ENCODE measurements at regions of chr17 and their contacts with region 1.

Region 1: GRCh38 chr17:76557368-76558197 is 17.7 kb downstream of the PRCD start:
- DNase-seq: peak; percentile 82
- ATAC-seq: peak; percentile 85
- H3K4me3 ChIP-seq: peak overlapping the region; percentile 74
- H3K27ac ChIP-seq: peak overlapping the region; percentile 95
- H3K4me1 ChIP-seq: peaks cover 14% of the 10 kb centered on the region
- H3K27me3 ChIP-seq: no peaks in the 10 kb centered on the region
- CTCF ChIP-seq: peak; percentile 24 to 65 (median 64); a peak in 5 of 6 replicates
- EP300 ChIP-seq: no peak
- POLR2A ChIP-seq: peak; percentile 98
- RAD21 ChIP-seq: no peak

Region 2: DNA sequence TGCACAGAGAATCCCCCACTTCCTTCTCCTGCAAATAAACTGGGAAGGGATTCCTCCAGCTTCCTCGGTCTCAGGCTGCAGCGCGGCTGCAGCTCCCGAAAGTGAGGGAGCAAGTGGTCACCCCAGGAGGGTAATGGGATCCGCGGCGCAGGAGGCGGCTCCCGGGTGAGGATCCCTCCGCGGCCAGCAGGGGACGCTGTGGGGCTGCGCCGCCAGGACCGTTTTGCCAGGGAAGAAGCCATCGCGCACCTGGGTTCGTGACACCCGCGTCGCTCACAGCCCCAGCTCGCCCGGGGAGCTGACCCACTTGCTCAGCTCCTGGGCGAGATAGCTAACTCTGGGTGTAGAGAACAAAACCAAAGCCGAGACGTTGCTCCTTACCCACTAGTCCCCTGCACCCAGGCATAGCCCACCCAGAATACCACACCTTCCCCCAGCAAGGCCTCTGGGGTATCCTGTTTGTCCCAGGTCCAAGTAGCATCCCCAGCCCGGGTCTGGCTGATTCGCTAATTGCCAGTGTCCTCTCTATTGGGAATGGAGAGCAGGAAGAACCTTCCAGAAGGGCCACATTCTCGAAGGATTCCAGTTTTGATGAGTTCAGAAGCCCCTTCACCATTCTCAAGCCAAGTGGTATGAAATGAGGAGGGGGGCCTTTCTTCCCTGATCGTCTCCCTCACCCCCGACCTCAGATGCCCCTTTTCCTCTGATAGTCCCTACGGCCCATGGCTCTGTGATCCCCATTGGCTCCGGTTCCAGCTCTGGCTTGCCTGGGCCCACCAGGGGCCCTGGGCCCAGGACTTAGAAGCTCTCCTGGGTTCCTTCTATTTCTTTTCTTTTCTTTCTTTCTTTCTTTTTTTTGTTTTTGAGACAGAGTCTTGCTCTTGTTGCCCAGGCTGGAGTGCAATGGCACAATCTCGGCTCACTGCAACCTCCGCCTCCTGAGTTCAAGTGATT is 34.2 kb before region 1 on chr17:
- CTCF ChIA-PET with region 1: interaction called, 46 read pairs
- POLR2A ChIA-PET with region 1: interaction called, 13 read pairs
- RAD21 ChIA-PET with region 1: interaction called, 17 read pairs
- SMC1A ChIA-PET with region 1: interaction called, 18 read pairs
- in situ Hi-C with region 1: no loop called
- intact Hi-C with region 1: no loop called
- DNase-seq: no peak
- ATAC-seq: peak; percentile 75
- H3K4me3 ChIP-seq: no peak overlapping the region
- H3K27ac ChIP-seq: no peak overlapping the region
- H3K4me1 ChIP-seq: peaks cover 10% of the 10 kb centered on the region
- H3K27me3 ChIP-seq: no peaks in the 10 kb centered on the region
- CTCF ChIP-seq: peak; percentile 99 to 100 (median 99); a peak in 5 of 6 replicates
- EP300 ChIP-seq: no peak
- POLR2A ChIP-seq: no peak
- RAD21 ChIP-seq: peak; percentile 89

Region 3: GRCh38 chr17:76547184-76547641 is 10.4 kb before region 1 on chr17:
- CTCF ChIA-PET with region 1: interaction called, 32 read pairs
- POLR2A ChIA-PET with region 1: interaction called, 6 read pairs
- RAD21 ChIA-PET with region 1: interaction called, 4 read pairs
- SMC1A ChIA-PET with region 1: interaction called, 7 read pairs
- in situ Hi-C with region 1: no loop called
- intact Hi-C with region 1: no loop called
- DNase-seq: no peak
- ATAC-seq: peak; percentile 93
- H3K4me3 ChIP-seq: no peak overlapping the region
- H3K27ac ChIP-seq: no peak overlapping the region
- H3K4me1 ChIP-seq: no peaks in the 10 kb centered on the region; the same call in 1 of the 2 replicates
- H3K27me3 ChIP-seq: peaks cover 0 to 3% of the 10 kb centered on the region in 2 experiments; a peak in 3 of 4 replicates
- CTCF ChIP-seq: peak; percentile 65 to 82 (median 80)
- EP300 ChIP-seq: no peak
- POLR2A ChIP-seq: no peak
- RAD21 ChIP-seq: peak; percentile 79

Region 4: DNA sequence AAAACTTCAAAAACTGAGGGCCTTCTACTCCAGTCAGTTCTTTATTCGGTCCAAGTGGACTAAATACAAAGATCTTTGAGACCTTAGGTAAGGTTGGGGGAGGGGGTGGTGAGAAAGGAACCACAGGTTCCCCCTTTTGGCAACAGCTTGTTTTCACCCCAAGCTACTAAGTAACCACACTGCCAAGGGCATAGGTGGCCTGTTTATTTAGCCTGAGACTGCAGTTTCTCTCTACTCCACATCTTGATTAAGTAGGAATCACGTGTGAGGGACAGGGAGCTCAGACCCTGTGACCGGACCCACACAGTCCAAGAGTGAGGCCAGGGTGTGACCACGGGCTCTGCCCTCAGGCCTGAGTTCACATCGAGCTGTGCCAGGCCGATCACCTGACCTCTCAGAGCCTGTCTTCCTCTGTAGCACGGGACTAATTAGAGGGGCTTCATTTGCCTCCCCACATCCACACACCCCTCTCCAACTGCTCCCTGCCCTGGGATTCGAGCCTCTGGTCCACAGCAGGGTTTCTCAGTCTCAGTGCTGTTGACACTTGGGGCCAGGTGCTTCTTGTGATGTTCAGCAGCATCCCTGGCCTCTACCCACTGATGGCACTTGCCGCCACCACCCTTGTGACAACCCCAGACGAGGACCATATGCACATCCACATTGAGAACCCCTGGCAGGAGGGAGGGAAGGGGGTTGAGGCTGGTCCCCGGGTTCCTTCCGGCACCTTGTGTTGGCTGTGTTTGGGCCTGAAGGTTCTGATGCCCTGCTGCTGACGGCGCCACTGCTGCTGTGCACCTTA is 10.2 kb after region 1 on chr17:
- CTCF ChIA-PET with region 1: interaction called, 17 read pairs
- POLR2A ChIA-PET with region 1: interaction called, 6 read pairs
- RAD21 ChIA-PET with region 1: no interaction called
- SMC1A ChIA-PET with region 1: interaction called, 6 read pairs
- in situ Hi-C with region 1: no loop called
- intact Hi-C with region 1: no loop called
- DNase-seq: no peak
- ATAC-seq: peak; percentile 63
- H3K4me3 ChIP-seq: no peak overlapping the region
- H3K27ac ChIP-seq: no peak overlapping the region
- H3K4me1 ChIP-seq: peaks cover 7% of the 10 kb centered on the region
- H3K27me3 ChIP-seq: no peaks in the 10 kb centered on the region
- CTCF ChIP-seq: no peak
- EP300 ChIP-seq: peak in 1 of 2 experiments; percentile 22; a peak in 1 of 4 replicates
- POLR2A ChIP-seq: peak; percentile 23; the same call in 1 of the 2 replicates
- RAD21 ChIP-seq: no peak

Region 5: DNA sequence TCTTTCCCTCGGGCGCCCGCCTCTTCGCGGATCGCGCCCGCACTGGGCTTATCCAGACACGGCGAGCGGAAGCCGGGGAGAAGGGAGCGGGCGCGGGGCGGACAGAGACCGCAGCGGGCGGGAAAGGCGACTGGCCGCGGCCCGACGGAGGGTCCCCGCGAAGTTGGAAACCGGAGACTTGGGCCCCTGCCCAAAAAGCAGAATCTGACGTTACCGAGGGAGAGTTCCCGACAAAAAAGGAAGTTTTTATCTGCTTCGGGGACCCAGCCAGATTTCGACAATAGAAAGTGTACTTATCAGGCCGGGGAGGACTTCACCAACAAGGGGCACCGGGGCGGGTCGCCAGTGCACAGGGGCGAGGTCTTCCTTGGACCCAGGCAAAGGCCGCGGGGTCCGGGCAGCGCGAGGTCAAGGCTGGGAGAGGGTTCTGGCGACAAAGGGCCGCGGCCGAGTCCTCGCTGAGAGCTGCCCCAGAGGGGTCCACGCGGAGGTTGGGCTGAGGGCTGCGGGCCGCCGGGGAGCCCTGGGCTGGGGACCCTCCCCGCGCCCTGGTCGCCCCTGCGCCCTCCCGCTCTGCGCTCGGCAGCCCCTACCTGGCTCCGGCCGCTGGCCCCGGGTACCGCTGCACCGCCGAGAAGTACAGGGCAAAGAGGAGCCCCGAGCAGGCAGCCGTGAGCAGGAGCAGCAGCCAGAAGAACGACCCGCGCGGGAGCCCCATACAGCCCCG is 27.7 kb after region 1 on chr17:
- CTCF ChIA-PET with region 1: interaction called, 14 read pairs
- POLR2A ChIA-PET with region 1: interaction called, 3 read pairs
- RAD21 ChIA-PET with region 1: interaction called, 3 read pairs
- SMC1A ChIA-PET with region 1: interaction called, 8 read pairs
- in situ Hi-C with region 1: no loop called
- intact Hi-C with region 1: no loop called
- DNase-seq: no peak
- ATAC-seq: peak; percentile 13
- H3K4me3 ChIP-seq: peak overlapping the region; percentile 63; the same call in 1 of the 2 replicates
- H3K27ac ChIP-seq: no peak overlapping the region
- H3K4me1 ChIP-seq: peaks cover 11% of the 10 kb centered on the region
- H3K27me3 ChIP-seq: peaks cover 3 to 9% of the 10 kb centered on the region in 2 experiments; a peak in 3 of 4 replicates
- CTCF ChIP-seq: no peak
- EP300 ChIP-seq: no peak
- POLR2A ChIP-seq: no peak
- RAD21 ChIP-seq: no peak

Region 6: GRCh38 chr17:76597728-76598474 is 40.3 kb after region 1 on chr17:
- CTCF ChIA-PET with region 1: interaction called, 14 read pairs
- POLR2A ChIA-PET with region 1: interaction called, 3 read pairs
- RAD21 ChIA-PET with region 1: interaction called, 9 read pairs
- SMC1A ChIA-PET with region 1: interaction called, 6 read pairs
- in situ Hi-C with region 1: no loop called
- intact Hi-C with region 1: no loop called
- DNase-seq: no peak
- ATAC-seq: peak; percentile 62
- H3K4me3 ChIP-seq: no peak overlapping the region
- H3K27ac ChIP-seq: no peak overlapping the region
- H3K4me1 ChIP-seq: no peaks in the 10 kb centered on the region
- H3K27me3 ChIP-seq: no peaks in the 10 kb centered on the region
- CTCF ChIP-seq: no peak
- EP300 ChIP-seq: no peak
- POLR2A ChIP-seq: no peak
- RAD21 ChIP-seq: no peak

Region 7: GRCh38 chr17:76681222-76682137 is 123.9 kb after region 1 on chr17:
- CTCF ChIA-PET with region 1: interaction called, 35 read pairs
- POLR2A ChIA-PET with region 1: interaction called, 3 read pairs
- RAD21 ChIA-PET with region 1: interaction called, 10 read pairs
- SMC1A ChIA-PET with region 1: interaction called, 14 read pairs
- in situ Hi-C with region 1: no loop called
- intact Hi-C with region 1: no loop called
- DNase-seq: no peak
- ATAC-seq: peak; percentile 94
- H3K4me3 ChIP-seq: no peak overlapping the region
- H3K27ac ChIP-seq: no peak overlapping the region
- H3K4me1 ChIP-seq: no peaks in the 10 kb centered on the region
- H3K27me3 ChIP-seq: peaks cover 0 to 5% of the 10 kb centered on the region in 2 experiments; a peak in 2 of 4 replicates
- CTCF ChIP-seq: peak; percentile 81 to 86 (median 83)
- EP300 ChIP-seq: no peak
- POLR2A ChIP-seq: no peak
- RAD21 ChIP-seq: peak; percentile 82

Region 8: DNA sequence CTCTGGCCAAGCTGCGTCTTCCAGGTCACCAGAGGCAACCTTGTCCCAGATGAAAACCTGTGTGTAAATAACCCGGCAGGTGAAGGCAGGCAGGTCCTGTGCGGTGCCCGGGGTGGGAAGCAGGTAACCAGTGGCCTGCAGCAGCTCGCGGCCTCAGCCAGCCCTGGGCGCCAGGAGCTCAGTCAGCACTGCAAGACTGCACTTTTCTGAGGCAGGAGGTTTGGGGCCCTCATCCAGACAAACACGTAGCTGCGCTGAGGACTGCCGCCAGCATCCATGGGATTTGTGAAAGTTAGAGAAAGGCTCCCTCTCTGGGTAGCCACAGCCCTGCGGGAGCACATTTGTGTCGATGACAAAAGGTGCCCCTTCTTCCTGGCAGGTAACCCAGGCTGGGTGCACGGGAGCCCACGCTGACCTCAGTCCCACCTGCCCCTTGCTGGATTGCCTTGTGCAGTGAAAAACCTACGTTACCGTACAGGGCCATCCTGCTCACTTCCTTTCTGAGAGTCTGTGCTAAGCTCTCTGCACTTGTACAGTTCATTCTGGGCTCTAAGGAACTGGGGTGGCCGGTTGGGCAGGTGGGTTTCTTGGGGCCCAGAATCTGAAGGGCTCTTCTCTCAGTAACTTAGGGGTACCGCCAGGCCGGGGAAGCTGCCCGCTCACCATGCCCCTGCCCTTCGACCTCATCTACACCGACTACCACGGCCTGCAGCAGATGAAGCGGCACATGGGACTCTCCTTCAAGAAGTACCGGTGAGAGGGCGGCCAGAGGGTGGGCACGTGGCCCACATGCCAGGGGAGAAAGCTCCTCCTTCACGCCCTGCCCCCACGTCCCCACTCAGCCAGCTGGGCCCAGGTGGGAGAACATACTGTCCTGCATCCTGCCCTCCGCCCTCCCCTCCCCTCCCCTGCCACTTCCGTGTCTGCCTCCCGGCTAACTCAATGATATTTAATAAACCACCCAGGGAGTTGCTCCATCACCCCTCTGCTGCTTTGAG is 367.1 kb after region 1 on chr17:
- CTCF ChIA-PET with region 1: no interaction called
- POLR2A ChIA-PET with region 1: no interaction called
- RAD21 ChIA-PET with region 1: no interaction called
- SMC1A ChIA-PET with region 1: no interaction called
- in situ Hi-C with region 1: no loop called
- intact Hi-C with region 1: no loop called
- DNase-seq: no peak
- ATAC-seq: no peak
- H3K4me3 ChIP-seq: no peak overlapping the region
- H3K27ac ChIP-seq: no peak overlapping the region
- H3K4me1 ChIP-seq: no peaks in the 10 kb centered on the region
- H3K27me3 ChIP-seq: peaks cover 3 to 4% of the 10 kb centered on the region in 2 experiments; a peak in 1 of 4 replicates
- CTCF ChIP-seq: no peak
- EP300 ChIP-seq: no peak
- POLR2A ChIP-seq: no peak
- RAD21 ChIP-seq: no peak